GM13976 (cell line): ENCODE measurements at regions of chr15 and their contacts with region 1.

Region 1: GRCh38 chr15:50145451-50145872 is 26.4 kb upstream of the ATP8B4 start:
- DNase-seq: peak; percentile 24
- CTCF ChIP-seq: no peak

Region 2: GRCh38 chr15:49082960-49083359 is 1062.5 kb before region 1 on chr15:
- in situ Hi-C with region 1: loop called (anchors 25 kb)
- DNase-seq: no peak
- CTCF ChIP-seq: no peak

Region 3: GRCh38 chr15:50051803-50052419 is 93.6 kb before region 1 on chr15:
- in situ Hi-C with region 1: no loop called
- DNase-seq: peak; percentile 17
- CTCF ChIP-seq: peak; percentile 4